PC-3 (cell line): ENCODE measurements at regions of chr10 and their contacts with region 1.

Region 1: GRCh38 chr10:34339816-34340553 is 475.1 kb downstream of the PARD3 start:
- DNase-seq: no peak
- ATAC-seq: no peak
- H3K4me3 ChIP-seq: no peak overlapping the region
- H3K27ac ChIP-seq: no peak overlapping the region
- H3K4me1 ChIP-seq: peaks cover 16% of the 10 kb centered on the region
- H3K27me3 ChIP-seq: no peaks in the 10 kb centered on the region
- CTCF ChIP-seq: no peak

Region 2: DNA sequence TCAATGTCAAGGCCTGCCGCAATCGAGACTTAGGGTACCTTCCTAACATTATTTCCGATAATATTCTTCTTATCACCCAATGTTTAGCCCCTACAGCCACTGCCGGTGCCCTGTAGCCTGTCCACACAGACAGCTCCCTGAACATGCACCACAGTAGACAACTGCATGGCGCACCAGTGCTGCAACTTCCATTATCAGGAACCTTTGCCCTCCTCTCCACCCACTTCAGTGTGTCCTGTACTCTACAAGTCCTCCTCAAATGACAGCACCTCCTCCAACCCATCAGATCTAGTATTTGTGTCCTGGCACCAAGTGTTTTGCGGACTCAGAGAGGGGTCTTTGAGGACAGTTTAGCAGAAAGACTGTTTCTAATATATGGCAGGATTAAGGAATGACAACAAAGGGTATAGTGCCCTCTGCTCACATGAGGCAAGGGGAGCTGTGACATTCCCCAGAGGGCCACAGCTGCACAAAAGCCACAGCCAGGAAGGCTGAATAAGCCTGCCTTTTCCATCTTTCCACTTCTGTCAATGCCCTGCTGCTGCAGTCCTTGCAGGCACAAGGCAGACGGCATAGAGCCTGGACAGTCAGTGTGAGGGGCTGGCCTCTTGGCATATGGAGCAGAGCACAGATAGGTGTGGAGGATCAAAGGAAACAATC is 139.7 kb after region 1 on chr10:
- CTCF ChIA-PET with region 1: no interaction called
- POLR2A ChIA-PET with region 1: interaction called, 14 read pairs
- intact Hi-C with region 1: no loop called
- DNase-seq: no peak
- ATAC-seq: no peak
- H3K4me3 ChIP-seq: no peak overlapping the region
- H3K27ac ChIP-seq: no peak overlapping the region
- H3K4me1 ChIP-seq: peaks cover 18% of the 10 kb centered on the region
- H3K27me3 ChIP-seq: no peaks in the 10 kb centered on the region
- CTCF ChIP-seq: no peak